Cardiac septum (tissue), 1 donor: ENCODE measurements at regions of chr7 and their contacts with region 1.

Region 1: DNA sequence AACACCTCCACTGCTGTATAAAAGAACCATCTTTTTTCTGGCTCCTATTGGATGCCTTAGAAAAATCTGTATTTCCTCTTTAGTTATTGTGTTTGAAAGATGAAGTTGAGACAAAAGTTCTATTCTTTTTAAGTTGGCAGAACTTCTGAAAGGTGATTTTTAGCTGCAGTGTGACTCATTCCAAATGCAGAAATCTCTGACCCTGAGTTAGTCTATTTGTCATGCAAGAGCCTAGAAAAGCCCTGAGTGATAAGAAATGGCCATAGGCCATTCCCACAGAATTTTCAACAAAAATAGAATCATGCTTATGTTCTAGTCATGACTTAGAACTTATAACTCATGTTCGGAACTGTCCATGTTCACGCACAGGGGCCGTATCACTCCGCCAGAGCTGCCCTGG is 89.1 kb downstream of the EGFR start:
- DNase-seq: no peak

Region 2: DNA sequence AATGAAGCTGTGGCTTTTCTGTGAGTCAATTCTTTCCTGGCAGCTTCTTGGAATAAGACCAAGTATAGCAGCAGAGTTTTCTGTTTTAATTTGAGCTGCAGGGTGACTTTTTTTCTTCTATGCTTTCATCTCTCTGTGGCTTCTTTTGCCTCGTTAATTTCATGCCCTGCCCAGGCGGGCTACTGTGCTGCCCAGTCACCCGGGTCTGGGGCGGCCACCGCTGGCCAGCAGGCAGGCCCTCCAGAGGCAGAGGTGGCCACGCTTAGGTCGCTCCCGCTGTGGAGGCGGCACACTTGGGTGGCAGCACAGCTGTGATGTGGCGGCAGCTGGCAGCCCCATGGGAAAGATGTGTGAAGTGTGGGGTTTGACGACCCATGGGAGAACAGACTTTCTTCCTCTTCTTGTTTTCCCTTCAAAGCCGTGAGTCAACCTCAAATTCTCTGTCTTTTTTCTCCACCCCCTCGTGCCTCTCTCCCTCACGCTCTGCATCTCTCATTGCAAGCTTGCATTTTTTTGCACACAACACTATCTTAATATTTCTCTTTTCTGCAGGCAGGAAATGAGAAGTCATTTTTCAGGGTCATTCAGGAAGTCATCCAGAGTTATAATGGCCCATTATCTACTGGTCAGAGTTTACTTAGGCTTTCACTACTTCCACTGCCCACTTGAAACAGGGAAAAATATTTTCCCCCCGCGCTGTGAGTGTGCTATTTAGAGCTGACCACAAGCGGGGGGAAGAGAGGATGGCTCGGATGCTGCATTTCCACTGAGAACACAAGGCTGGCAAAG is 21.3 kb before region 1 on chr7:
- intact Hi-C with region 1: loop called (anchors 1 kb)
- DNase-seq: no peak